Heart right ventricle (tissue), 16 donors: ENCODE measurements at regions of chr5 and their contacts with region 1.

Region 1: DNA sequence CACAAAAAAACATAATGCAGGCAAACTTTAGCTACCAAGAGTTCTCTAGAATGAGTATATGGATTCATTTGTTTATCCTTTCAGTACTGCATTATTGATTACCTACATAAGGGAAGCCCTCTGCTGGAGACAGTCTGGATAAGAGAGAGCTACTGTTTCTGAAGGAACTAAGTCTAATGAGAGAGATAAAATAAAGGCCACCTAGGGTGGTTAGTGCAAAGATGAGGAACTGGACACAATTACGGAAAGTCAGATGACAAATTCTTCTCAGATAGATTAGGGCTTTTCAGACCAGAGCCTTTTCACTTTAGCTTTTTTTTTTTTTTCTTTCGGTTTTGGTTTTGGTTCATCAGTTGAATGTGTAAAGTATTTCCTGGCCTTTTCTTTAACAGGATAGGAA is 31.3 kb downstream of the ISOC1 start:
- DNase-seq: no peak
- ATAC-seq: no peak
- H3K4me3 ChIP-seq: no peak overlapping the region
- H3K27ac ChIP-seq: peak overlapping the region in 4 of 10 donors; percentile 2 to 61 (median 16)
- H3K4me1 ChIP-seq: peaks cover 0 to 14% (median 3%) of the 10 kb centered on the region in 9 donors
- H3K27me3 ChIP-seq: no peaks in the 10 kb centered on the region
- CTCF ChIP-seq: peak in 3 of 9 donors; percentile 7 to 19 (median 17)

Region 2: DNA sequence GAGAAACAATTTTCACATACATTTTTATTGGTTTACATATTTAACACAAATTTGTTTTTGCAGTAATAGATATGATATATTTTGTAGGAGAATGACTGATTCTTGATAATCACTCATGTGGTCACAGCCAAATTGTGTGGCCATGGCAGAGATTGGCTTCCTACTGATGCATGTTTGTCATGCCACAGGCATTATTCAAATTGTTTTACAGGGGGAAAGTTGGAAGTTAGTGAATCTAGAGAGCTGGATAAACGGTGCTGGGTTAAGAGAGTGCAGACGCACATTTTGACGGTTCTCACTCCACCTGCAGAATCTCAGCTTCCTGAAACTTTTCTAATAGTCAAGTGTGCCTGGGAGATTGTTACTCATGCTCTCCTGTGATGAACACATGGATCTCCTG is 496.7 kb before region 1 on chr5:
- intact Hi-C with region 1: no loop called
- DNase-seq: no peak
- ATAC-seq: no peak
- H3K4me3 ChIP-seq: no peak overlapping the region
- H3K27ac ChIP-seq: no peak overlapping the region
- H3K4me1 ChIP-seq: no peaks in the 10 kb centered on the region
- H3K27me3 ChIP-seq: no peaks in the 10 kb centered on the region
- CTCF ChIP-seq: no peak

Region 3: DNA sequence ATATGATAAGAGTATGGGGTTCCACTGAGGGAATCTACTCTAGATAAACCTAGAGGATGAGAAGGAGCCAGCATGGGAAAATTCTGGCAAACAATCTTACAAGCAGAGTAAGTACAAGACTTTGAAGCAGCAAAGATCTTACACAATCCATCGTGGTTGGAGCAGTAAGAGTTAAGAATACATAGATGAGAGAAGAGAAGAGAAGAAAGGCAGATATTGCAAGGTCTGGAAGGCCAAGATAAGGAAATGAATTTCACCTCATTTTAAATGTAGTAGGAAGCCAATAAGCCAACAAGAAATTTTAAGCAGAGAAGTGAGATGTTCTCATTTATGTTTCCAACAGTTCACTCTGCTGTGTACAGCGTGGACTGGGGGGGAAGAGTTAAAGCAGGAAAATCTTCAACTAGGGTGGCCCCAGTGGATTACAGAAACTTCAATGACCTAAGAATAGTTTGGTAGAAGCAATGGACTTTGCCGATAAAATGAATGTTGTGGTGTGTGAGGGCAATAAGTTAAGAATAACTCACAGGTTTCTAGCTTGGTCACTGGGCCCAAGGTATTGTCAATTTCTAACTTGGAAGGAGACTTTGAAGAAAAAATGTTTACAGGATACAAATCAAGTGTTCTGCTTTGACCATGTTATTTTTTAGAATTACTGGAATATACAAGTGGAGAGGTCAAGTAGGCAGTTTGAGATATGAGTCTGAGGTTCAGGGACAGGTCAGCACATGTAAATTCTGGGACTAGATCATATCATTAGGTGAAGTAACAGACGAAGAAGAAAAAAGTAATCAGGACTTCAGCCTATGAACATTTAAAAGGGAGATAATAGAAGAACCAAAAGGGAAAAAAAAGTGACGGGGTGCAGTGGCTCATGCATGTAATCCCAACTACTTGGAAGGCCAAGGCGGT is 43.3 kb before region 1 on chr5:
- intact Hi-C with region 1: loop called in 1 of 10 experiments (anchors 1 kb)
- DNase-seq: no peak
- ATAC-seq: no peak
- H3K4me3 ChIP-seq: no peak overlapping the region
- H3K27ac ChIP-seq: no peak overlapping the region
- H3K4me1 ChIP-seq: peaks cover 0 to 5% (median 0%) of the 10 kb centered on the region in 9 donors
- H3K27me3 ChIP-seq: no peaks in the 10 kb centered on the region
- CTCF ChIP-seq: no peak

Region 4: GRCh38 chr5:129172580-129172979 is 46.8 kb after region 1 on chr5:
- intact Hi-C with region 1: no loop called
- DNase-seq: no peak
- ATAC-seq: peak in 6 of 8 donors; percentile 39 to 71 (median 55)
- H3K4me3 ChIP-seq: no peak overlapping the region
- H3K27ac ChIP-seq: no peak overlapping the region
- H3K4me1 ChIP-seq: peaks cover 0 to 6% (median 0%) of the 10 kb centered on the region in 9 donors
- H3K27me3 ChIP-seq: no peaks in the 10 kb centered on the region
- CTCF ChIP-seq: peak in 7 of 9 donors; percentile 17 to 46 (median 35)